PC-9 (cell line): ENCODE measurements at regions of chr2 and their contacts with region 1.

Region 1: DNA sequence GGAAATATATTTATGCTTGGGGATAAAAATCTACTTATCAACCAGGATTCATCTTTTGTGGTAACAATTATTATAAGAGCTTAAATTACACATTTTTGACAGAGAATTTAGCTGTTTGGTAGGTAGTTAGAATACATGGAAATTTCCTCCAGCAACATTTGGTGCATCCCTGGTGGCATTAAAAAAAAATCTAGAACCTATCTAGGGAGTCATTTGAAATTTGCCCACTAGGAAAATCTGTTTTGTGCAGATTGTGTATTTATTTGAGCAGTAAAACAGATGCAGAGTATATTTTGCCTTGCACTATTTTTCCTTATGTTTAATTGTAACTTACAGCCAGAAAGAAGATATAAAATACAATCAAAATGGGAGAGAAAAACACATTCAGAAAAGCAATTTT is 208.4 kb upstream of the LRP1B start:
- DNase-seq: no peak
- H3K4me3 ChIP-seq: no peak overlapping the region
- H3K27ac ChIP-seq: no peak overlapping the region
- H3K4me1 ChIP-seq: no peaks in the 10 kb centered on the region
- H3K27me3 ChIP-seq: no peaks in the 10 kb centered on the region
- CTCF ChIP-seq: no peak

Region 2: GRCh38 chr2:142380372-142380771 is 41.1 kb after region 1 on chr2:
- CTCF ChIA-PET with region 1: no interaction called
- POLR2A ChIA-PET with region 1: interaction called, 10 read pairs
- intact Hi-C with region 1: no loop called
- DNase-seq: no peak
- H3K4me3 ChIP-seq: no peak overlapping the region
- H3K27ac ChIP-seq: no peak overlapping the region
- H3K4me1 ChIP-seq: no peaks in the 10 kb centered on the region
- H3K27me3 ChIP-seq: no peaks in the 10 kb centered on the region
- CTCF ChIP-seq: no peak